A549 (cell line): ENCODE measurements at regions of chr15 and their contacts with region 1.

Region 1: GRCh38 chr15:58770857-58771620 is at the start of gene MINDY2:
- DNase-seq: peak; percentile 97 to 99
- ATAC-seq: peak; percentile 94 to 98
- H3K4me3 ChIP-seq: peak within 1 kb of the TSS; percentile 80
- H3K27ac ChIP-seq: peak within 1 kb of the TSS; percentile 85 to 96
- H3K4me1 ChIP-seq: peaks cover 23% of the 10 kb centered on the region
- CTCF ChIP-seq: peak; percentile 34; the same call in 2 of the 3 replicates
- EP300 ChIP-seq: no peak
- POLR2A ChIP-seq: peak; percentile 81
- RAD21 ChIP-seq: peak; percentile 20 to 48
- polyA plus RNA-seq, gene MINDY2: 4.8 and 7.0 TPM in 2 replicates

Region 2: GRCh38 chr15:58546635-58547627 is 224.1 kb before region 1 on chr15:
- CTCF ChIA-PET with region 1: interaction called, 3 read pairs
- POLR2A ChIA-PET with region 1: interaction called, 17 read pairs
- DNase-seq: peak; percentile 93 to 95
- ATAC-seq: peak; percentile 93 to 96
- H3K4me3 ChIP-seq: peak overlapping the region; percentile 18; the same call in 1 of the 3 replicates
- H3K27ac ChIP-seq: peak overlapping the region; percentile 95
- H3K4me1 ChIP-seq: peaks cover 51% of the 10 kb centered on the region
- CTCF ChIP-seq: no peak
- EP300 ChIP-seq: peak; percentile 71 to 84; a peak in 3 of 5 replicates
- POLR2A ChIP-seq: no peak
- RAD21 ChIP-seq: peak; percentile 49 to 50; a peak in 4 of 5 replicates

Region 3: GRCh38 chr15:58749532-58750337 is 21.3 kb before region 1 on chr15 and contains the start of gene ADAM10:
- CTCF ChIA-PET with region 1: interaction called, 21 read pairs
- POLR2A ChIA-PET with region 1: interaction called, 98 read pairs
- DNase-seq: peak; percentile 99
- ATAC-seq: peak; percentile 89 to 97
- H3K4me3 ChIP-seq: peak within 1 kb of the TSS; percentile 91
- H3K27ac ChIP-seq: peak within 1 kb of the TSS; percentile 93 to 97
- H3K4me1 ChIP-seq: peaks cover 26% of the 10 kb centered on the region
- CTCF ChIP-seq: no peak
- EP300 ChIP-seq: no peak; a peak in 1 of 5 replicates
- POLR2A ChIP-seq: peak; percentile 90
- RAD21 ChIP-seq: 0 out of 5 replicates have a peak, but pooled peaks have one; percentile 14 to 18
- polyA plus RNA-seq, gene ADAM10: 210 and 236 TPM in 2 replicates

Region 4: GRCh38 chr15:58758138-58758537 is 12.9 kb before region 1 on chr15:
- CTCF ChIA-PET with region 1: interaction called, 25 read pairs
- POLR2A ChIA-PET with region 1: interaction called, 24 read pairs
- DNase-seq: peak in 1 of 2 experiments; percentile 47
- ATAC-seq: peak in 1 of 2 experiments; percentile 79; a peak in 3 of 6 replicates
- H3K4me3 ChIP-seq: no peak overlapping the region
- H3K27ac ChIP-seq: no peak overlapping the region; a peak in 1 of 6 replicates
- H3K4me1 ChIP-seq: peaks cover 5% of the 10 kb centered on the region; the same call in 2 of the 3 replicates
- CTCF ChIP-seq: peak; percentile 53
- EP300 ChIP-seq: no peak
- POLR2A ChIP-seq: no peak
- RAD21 ChIP-seq: peak; percentile 77 to 78

Region 5: GRCh38 chr15:58793862-58794261 is 22.8 kb after region 1 on chr15:
- CTCF ChIA-PET with region 1: interaction called, 14 read pairs
- POLR2A ChIA-PET with region 1: interaction called, 3 read pairs
- DNase-seq: no peak
- ATAC-seq: no peak
- H3K4me3 ChIP-seq: no peak overlapping the region
- H3K27ac ChIP-seq: no peak overlapping the region
- H3K4me1 ChIP-seq: no peaks in the 10 kb centered on the region
- CTCF ChIP-seq: no peak
- EP300 ChIP-seq: no peak
- POLR2A ChIP-seq: no peak
- RAD21 ChIP-seq: no peak